K562 (cell line): ENCODE measurements at regions of chr13 and their contacts with region 1.

Region 1: GRCh38 chr13:96822895-96823294 is 171.4 kb downstream of the OXGR1 start:
- DNase-seq: peak; percentile 9 to 17 (median 14)
- ATAC-seq: peak; percentile 89
- H3K4me3 ChIP-seq: no peak overlapping the region
- H3K27ac ChIP-seq: no peak overlapping the region
- H3K4me1 ChIP-seq: no peaks in the 10 kb centered on the region
- H3K27me3 ChIP-seq: no peaks in the 10 kb centered on the region
- CTCF ChIP-seq: peak; percentile 39 to 48 (median 46); a peak in 5 of 6 replicates
- EP300 ChIP-seq: no peak
- POLR2A ChIP-seq: no peak
- RAD21 ChIP-seq: peak in 1 of 2 experiments; percentile 45; a peak in 2 of 4 replicates

Region 2: DNA sequence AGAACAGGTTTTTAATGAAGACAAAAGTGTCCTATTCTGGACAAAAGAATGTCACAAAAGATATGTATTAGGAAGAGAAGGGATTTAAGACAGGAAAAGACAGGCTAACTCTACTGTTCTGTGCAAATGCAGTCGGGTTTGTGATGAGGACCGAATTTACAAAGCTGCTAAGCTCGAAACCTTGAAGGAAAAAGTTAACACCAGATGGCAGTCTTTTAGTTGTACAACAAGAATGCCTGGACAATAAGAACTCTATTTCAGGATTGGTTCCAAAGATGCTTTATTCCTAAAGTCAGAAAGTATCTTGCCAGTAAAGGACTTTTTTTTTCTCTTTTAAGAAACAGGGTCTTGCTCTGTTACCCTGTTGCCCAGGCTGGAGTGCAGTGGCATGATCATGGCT is 681.9 kb before region 1 on chr13:
- CTCF ChIA-PET with region 1: no interaction called
- POLR2A ChIA-PET with region 1: no interaction called
- in situ Hi-C with region 1: no loop called
- intact Hi-C with region 1: loop called (anchors 10 kb)
- DNase-seq: peak in 1 of 4 experiments; percentile 6
- ATAC-seq: no peak
- H3K4me3 ChIP-seq: no peak overlapping the region
- H3K27ac ChIP-seq: no peak overlapping the region
- H3K4me1 ChIP-seq: no peaks in the 10 kb centered on the region
- H3K27me3 ChIP-seq: no peaks in the 10 kb centered on the region
- CTCF ChIP-seq: peak in 1 of 3 experiments; percentile 23; a peak in 2 of 6 replicates
- EP300 ChIP-seq: no peak
- POLR2A ChIP-seq: no peak
- RAD21 ChIP-seq: peak; percentile 21 to 39; a peak in 1 of 4 replicates

Region 3: DNA sequence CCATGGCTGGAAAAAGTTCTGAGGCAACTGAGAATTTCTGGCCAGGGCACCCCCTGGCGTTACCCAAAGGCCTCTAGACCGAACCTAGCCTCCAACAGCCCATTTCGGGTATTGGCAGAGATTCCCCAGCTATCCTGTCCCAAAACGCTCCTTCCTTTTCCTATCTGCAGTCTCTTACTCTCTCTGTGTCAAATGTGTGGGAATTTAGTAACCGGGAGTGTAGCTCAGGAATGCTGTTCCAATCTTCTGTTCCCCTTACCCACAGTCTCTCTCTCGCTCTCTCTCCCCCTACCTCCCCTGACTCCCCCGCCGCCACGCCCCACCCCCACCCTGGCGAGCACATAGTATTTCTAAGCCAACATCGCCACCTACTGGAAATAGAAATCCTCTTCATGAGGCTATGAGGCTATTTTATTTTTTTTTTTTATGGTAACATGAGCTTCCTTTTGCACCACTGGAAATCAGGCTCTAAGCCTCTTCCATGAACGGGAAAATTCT is 144.4 kb after region 1 on chr13:
- CTCF ChIA-PET with region 1: no interaction called
- POLR2A ChIA-PET with region 1: no interaction called
- in situ Hi-C with region 1: no loop called
- intact Hi-C with region 1: loop called (anchors 5 kb)
- DNase-seq: peak; percentile 54 to 64 (median 60)
- ATAC-seq: peak; percentile 93
- H3K4me3 ChIP-seq: peak overlapping the region; percentile 13; the same call in 1 of the 2 replicates
- H3K27ac ChIP-seq: no peak overlapping the region
- H3K4me1 ChIP-seq: no peaks in the 10 kb centered on the region
- H3K27me3 ChIP-seq: no peaks in the 10 kb centered on the region
- CTCF ChIP-seq: peak; percentile 16 to 51 (median 35); a peak in 4 of 6 replicates
- EP300 ChIP-seq: no peak
- POLR2A ChIP-seq: no peak
- RAD21 ChIP-seq: no peak